B cell (primary cell): ENCODE measurements at regions of chr2 and their contacts with region 1.

Region 1: GRCh38 chr2:74391580-74392448 is 11.7 kb upstream of the DCTN1 start:
- DNase-seq: peak; percentile 98
- ATAC-seq: peak; percentile 89
- H3K4me3 ChIP-seq: peak overlapping the region; percentile 71 to 88 (median 80)
- H3K4me3 Mint-ChIP-seq: peak overlapping the region; percentile 99
- H3K27ac ChIP-seq: peak overlapping the region; percentile 94 to 95
- H3K27ac Mint-ChIP-seq: peak overlapping the region; percentile 100
- H3K4me1 ChIP-seq: peaks cover 18 to 24% of the 10 kb centered on the region in 2 donors
- H3K4me1 Mint-ChIP-seq: peaks cover 16% of the 10 kb centered on the region
- H3K27me3 ChIP-seq: peaks cover 0 to 7% (median 0%) of the 10 kb centered on the region in 4 experiments
- H3K27me3 Mint-ChIP-seq: peaks cover 5% of the 10 kb centered on the region
- CTCF ChIP-seq: peak; percentile 98

Region 2: GRCh38 chr2:73736855-73737779 is 654.7 kb before region 1 on chr2 and contains the start of gene TPRKB:
- CTCF ChIA-PET with region 1: no interaction called
- POLR2A ChIA-PET with region 1: no interaction called
- intact Hi-C with region 1: loop called (anchors 2 kb)
- DNase-seq: peak; percentile 95
- ATAC-seq: peak; percentile 99
- H3K4me3 ChIP-seq: peak within 1 kb of the TSS; percentile 68 to 97 (median 88)
- H3K4me3 Mint-ChIP-seq: peak within 1 kb of the TSS; percentile 91
- H3K27ac ChIP-seq: peak within 1 kb of the TSS; percentile 59 to 78
- H3K27ac Mint-ChIP-seq: peak within 1 kb of the TSS; percentile 83
- H3K4me1 ChIP-seq: peaks cover 8 to 15% of the 10 kb centered on the region in 2 donors
- H3K4me1 Mint-ChIP-seq: peaks cover 16% of the 10 kb centered on the region
- H3K27me3 ChIP-seq: no peaks in the 10 kb centered on the region
- H3K27me3 Mint-ChIP-seq: no peaks in the 10 kb centered on the region
- CTCF ChIP-seq: no peak
- total RNA-seq, gene TPRKB: 24.3 and 31.2 TPM in 2 replicates

Region 3: GRCh38 chr2:74250189-74250631 is 141.6 kb before region 1 on chr2:
- CTCF ChIA-PET with region 1: interaction called, 6 read pairs
- POLR2A ChIA-PET with region 1: no interaction called
- intact Hi-C with region 1: loop called (anchors 5 kb)
- DNase-seq: peak; percentile 72
- ATAC-seq: peak; percentile 51
- H3K4me3 ChIP-seq: no peak overlapping the region
- H3K4me3 Mint-ChIP-seq: no peak overlapping the region
- H3K27ac ChIP-seq: no peak overlapping the region
- H3K27ac Mint-ChIP-seq: no peak overlapping the region
- H3K4me1 ChIP-seq: no peaks in the 10 kb centered on the region
- H3K4me1 Mint-ChIP-seq: peaks cover 6% of the 10 kb centered on the region
- H3K27me3 ChIP-seq: no peaks in the 10 kb centered on the region
- H3K27me3 Mint-ChIP-seq: no peaks in the 10 kb centered on the region
- CTCF ChIP-seq: peak; percentile 90

Region 4: DNA sequence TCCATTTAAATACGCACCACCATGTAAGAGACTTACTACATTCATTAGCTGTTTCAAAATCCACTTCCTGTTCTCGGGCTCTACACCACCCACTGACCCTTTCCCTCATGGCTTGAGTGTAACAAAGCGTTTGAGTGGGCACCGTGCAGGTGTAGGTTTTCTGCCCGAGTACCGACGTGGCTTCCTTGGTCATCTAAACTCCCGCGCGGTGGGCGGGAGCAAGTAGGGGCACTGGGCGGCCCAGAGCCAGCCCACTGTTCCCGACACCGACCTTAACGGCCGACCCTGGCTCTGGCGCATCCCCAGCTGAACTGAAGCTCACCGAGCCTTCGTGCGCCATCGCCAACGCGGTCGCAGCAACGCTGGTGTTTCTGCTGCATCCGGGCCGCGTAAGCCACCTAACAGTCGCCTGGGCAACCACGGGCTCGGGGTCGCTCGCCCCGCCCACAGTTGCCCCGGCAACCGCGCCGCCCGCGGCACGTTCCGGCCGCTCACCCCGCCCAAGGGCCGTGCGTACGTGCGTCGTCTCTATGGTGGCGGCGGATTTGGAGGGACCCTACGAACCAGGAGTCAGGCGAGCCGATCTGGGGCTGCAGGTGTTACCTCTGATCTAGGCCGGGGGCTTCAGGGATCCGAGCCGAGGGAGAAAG is 29.5 kb after region 1 on chr2 and contains the starts of genes C2orf81 and WDR54:
- CTCF ChIA-PET with region 1: interaction called, 6 read pairs
- POLR2A ChIA-PET with region 1: interaction called, 3 read pairs
- intact Hi-C with region 1: loop called (anchors 1 kb)
- DNase-seq: peak; percentile 97
- ATAC-seq: peak; percentile 90
- H3K4me3 ChIP-seq: peak within 1 kb of the TSS; percentile 61 to 98 (median 90)
- H3K4me3 Mint-ChIP-seq: peak within 1 kb of the TSS; percentile 98
- H3K27ac ChIP-seq: peak within 1 kb of the TSS; percentile 94
- H3K27ac Mint-ChIP-seq: peak within 1 kb of the TSS; percentile 99
- H3K4me1 ChIP-seq: peaks cover 29 to 41% of the 10 kb centered on the region in 2 donors
- H3K4me1 Mint-ChIP-seq: peaks cover 43% of the 10 kb centered on the region
- H3K27me3 ChIP-seq: no peaks in the 10 kb centered on the region
- H3K27me3 Mint-ChIP-seq: no peaks in the 10 kb centered on the region
- CTCF ChIP-seq: no peak
- total RNA-seq, gene C2orf81: 8.6 and 9.1 TPM in 2 replicates
- total RNA-seq, gene WDR54: 39.0 and 42.2 TPM in 2 replicates

Region 5: GRCh38 chr2:74482801-74483674 is 91.2 kb after region 1 on chr2 and contains the starts of genes CCDC142 and TTC31:
- CTCF ChIA-PET with region 1: interaction called, 4 read pairs
- POLR2A ChIA-PET with region 1: no interaction called
- intact Hi-C with region 1: loop called (anchors 1 kb)
- DNase-seq: peak; percentile 97
- ATAC-seq: peak; percentile 90
- H3K4me3 ChIP-seq: peak within 1 kb of the TSS; percentile 74 to 96 (median 88)
- H3K4me3 Mint-ChIP-seq: peak within 1 kb of the TSS; percentile 100
- H3K27ac ChIP-seq: peak within 1 kb of the TSS; percentile 71 to 84
- H3K27ac Mint-ChIP-seq: peak within 1 kb of the TSS; percentile 99
- H3K4me1 ChIP-seq: peaks cover 21 to 29% of the 10 kb centered on the region in 2 donors
- H3K4me1 Mint-ChIP-seq: peaks cover 34% of the 10 kb centered on the region
- H3K27me3 ChIP-seq: no peaks in the 10 kb centered on the region
- H3K27me3 Mint-ChIP-seq: no peaks in the 10 kb centered on the region
- CTCF ChIP-seq: peak; percentile 90
- total RNA-seq, gene CCDC142: 61.6 and 69.3 TPM in 2 replicates
- total RNA-seq, gene TTC31: 69.4 and 72.3 TPM in 2 replicates

Region 6: DNA sequence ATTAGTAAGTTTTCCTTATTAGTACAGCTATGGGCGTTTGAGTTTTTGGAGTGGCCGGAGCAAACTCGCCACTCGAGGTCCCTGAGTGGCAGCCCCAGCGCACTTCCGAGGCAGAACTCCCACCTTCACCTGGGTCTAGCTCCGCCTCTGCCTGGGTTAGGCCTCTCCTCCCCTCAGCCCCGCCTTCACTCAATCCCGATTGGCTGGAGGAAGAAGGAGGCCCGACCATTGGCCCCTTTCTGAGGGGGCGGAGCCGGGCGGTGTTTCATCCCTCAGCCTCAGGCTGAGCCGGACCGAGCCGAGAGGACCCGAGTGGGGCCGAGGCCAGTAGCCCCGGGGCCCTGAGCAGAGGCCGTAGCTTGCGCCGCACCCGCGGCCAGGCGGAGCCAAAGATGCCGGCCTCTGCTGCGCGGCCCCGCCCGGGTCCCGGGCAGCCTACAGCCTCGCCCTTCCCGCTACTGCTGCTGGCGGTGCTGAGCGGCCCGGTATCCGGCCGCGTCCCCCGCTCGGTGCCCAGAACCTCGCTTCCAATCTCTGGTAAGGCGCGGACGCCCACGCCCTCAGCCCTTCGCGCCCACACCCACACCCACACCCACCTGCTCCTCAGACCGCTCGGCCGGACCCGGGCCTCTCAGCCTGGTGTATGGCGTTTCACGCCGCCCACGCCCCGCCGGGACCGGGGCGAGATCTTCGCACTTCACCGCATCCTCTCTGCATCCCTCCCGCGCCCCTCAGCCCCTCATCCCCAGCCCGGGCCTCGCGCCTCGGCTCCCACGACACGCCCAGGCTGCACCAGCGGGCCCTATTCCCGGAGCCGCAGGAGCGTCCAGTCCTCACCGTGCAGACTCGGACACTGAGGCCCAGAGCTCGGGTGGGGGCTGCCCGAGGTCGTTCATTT is 262.4 kb after region 1 on chr2 and contains the start of gene SEMA4F:
- CTCF ChIA-PET with region 1: no interaction called
- POLR2A ChIA-PET with region 1: no interaction called
- intact Hi-C with region 1: loop called (anchors 1 kb)
- DNase-seq: peak; percentile 94
- ATAC-seq: peak; percentile 99
- H3K4me3 ChIP-seq: peak within 1 kb of the TSS; percentile 56 to 90 (median 80)
- H3K4me3 Mint-ChIP-seq: peak within 1 kb of the TSS; percentile 95
- H3K27ac ChIP-seq: peak within 1 kb of the TSS in 1 of 2 donors; percentile 53
- H3K27ac Mint-ChIP-seq: peak within 1 kb of the TSS; percentile 85
- H3K4me1 ChIP-seq: peaks cover 8 to 13% of the 10 kb centered on the region in 2 donors
- H3K4me1 Mint-ChIP-seq: peaks cover 18% of the 10 kb centered on the region
- H3K27me3 ChIP-seq: peaks cover 0 to 7% (median 3%) of the 10 kb centered on the region in 4 experiments
- H3K27me3 Mint-ChIP-seq: peaks cover 5% of the 10 kb centered on the region
- CTCF ChIP-seq: no peak
- total RNA-seq, gene SEMA4F: 18.9 and 19.3 TPM in 2 replicates

Region 7: DNA sequence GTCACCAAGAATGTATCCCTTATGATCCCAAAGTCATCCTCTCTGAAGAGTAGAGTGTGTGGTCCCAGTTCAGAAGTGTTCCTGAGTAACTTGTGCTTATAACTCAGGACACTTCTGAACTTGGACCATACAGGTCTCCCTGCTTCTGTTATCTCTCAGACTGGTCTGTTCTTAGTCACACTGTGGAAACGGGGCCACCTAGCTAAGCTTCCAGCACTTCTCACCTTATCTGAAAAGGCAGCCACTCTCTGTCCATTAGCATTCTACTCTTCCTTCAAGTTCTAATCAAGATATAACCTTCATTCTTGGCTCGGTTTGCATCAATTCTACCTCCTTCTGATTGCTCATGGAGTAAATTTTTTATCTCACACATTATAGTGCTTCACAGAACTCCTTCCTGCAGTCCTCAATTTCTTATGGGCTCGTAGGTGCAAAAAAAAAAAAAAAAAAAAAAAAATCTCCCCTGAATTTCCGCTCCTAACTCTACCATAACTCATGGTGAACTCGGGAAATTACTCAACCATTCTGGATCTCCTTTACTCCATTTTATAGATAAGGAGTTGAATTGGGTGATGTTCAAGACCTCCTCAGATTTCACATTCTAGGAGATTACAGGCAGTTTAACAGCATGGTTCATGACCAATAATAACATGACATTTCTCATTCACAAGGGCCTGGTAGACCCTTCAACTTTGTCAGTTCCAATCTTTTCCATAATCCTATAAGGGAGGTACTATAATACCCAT is 699.1 kb after region 1 on chr2:
- CTCF ChIA-PET with region 1: no interaction called
- POLR2A ChIA-PET with region 1: no interaction called
- intact Hi-C with region 1: no loop called
- DNase-seq: no peak
- ATAC-seq: no peak
- H3K4me3 ChIP-seq: no peak overlapping the region
- H3K4me3 Mint-ChIP-seq: no peak overlapping the region
- H3K27ac ChIP-seq: no peak overlapping the region
- H3K27ac Mint-ChIP-seq: no peak overlapping the region
- H3K4me1 ChIP-seq: no peaks in the 10 kb centered on the region
- H3K4me1 Mint-ChIP-seq: no peaks in the 10 kb centered on the region
- H3K27me3 ChIP-seq: no peaks in the 10 kb centered on the region
- H3K27me3 Mint-ChIP-seq: no peaks in the 10 kb centered on the region
- CTCF ChIP-seq: no peak